ENCODE measurements at regions of chr7 and their contacts with region 1.

Region 1: DNA sequence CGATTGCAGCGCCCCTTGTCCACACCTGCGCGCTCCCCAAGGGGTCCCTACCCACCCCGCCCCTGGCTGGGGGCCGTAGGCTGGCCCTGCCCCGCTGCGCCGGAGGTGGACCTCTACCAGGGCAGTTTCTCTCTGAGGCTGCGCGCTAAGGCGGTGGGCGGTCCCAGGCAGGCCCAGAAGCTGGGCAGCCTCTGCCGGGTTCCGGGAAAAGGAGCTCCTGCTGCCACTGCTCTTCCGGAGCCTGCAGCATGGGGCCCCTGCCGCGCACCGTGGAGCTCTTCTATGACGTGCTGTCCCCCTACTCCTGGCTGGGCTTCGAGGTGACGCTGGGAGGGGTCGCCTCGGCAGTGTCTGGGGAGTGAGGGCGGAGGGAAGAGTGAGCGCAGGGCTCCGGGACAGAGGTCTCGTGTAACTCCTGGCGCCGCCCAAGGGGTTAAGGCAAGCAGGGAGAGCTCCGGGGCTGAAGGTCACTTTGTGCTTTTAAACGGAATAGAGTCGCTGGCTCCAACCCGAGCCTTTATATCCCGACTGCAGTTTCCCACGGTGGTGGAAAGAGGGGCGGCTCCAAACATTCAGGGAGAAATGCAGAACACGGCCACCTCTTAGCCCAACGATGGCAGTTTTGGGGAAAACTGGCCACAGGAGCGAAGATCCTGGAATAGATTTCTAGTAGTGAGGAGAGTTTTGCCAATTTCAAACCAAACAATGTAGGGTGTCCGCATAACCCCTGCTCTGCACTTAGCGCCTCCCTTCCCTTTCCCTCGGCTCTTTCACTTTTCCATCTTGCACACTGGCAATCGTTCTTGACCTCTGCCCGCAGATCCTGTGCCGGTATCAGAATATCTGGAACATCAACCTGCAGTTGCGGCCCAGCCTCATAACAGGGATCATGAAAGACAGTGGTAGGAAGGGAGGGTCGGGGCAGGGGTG is at the start of gene GSTK1:
- DNase-seq: peak; percentile 96
- H3K4me3 Mint-ChIP-seq: peak within 1 kb of the TSS; percentile 97
- H3K27ac Mint-ChIP-seq: peak within 1 kb of the TSS; percentile 92
- H3K4me1 Mint-ChIP-seq: peaks cover 46% of the 10 kb centered on the region
- H3K27me3 Mint-ChIP-seq: no peaks in the 10 kb centered on the region
- total RNA-seq, gene GSTK1: 138 and 142 TPM in 2 replicates

Region 2: DNA sequence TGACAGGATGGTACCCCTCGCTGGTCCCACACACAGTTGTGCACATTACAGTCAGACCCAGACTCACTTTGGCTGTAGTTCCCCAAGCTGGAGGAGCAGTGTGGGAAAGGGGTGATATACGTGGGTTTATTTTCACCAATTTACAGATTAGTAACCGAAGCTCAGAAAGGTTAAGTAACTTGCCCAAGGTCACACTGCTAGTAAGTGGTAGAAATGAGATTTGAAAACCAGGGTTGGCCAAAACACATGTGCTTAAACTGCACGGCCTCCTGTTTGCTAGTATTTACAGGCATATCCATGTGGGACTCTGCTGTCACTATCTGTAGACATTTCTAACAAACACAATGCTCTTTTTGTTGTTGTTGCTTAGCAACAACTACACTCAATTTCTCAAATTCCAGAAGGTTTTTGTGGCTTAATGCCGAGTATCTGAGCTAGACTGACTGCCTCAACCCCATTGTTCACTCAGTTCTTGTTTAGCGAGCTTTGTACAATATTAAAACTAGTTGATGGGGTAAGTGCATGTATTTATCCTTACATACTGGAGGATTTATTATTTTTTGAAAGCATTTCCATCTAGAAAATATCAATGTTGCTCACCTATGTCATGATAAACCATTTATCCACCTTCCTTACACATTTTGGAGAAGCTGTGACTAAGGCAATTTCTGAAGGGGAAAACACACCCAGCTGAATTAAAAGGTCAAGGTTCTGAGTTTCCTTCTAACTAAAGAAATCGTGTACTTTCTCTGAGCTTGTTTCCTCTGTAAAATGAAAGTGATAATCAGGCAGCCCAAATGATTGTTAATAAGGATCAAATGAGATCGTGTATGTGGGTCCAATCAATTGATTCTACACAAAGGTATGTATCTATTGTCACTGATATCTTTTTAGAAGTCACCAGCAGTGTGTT is 15.9 kb after region 1 on chr7:
- intact Hi-C with region 1: loop called (anchors 2 kb)
- DNase-seq: peak; percentile 69
- H3K4me3 Mint-ChIP-seq: peak overlapping the region; percentile 85
- H3K27ac Mint-ChIP-seq: peak overlapping the region; percentile 96
- H3K4me1 Mint-ChIP-seq: peaks cover 40% of the 10 kb centered on the region
- H3K27me3 Mint-ChIP-seq: no peaks in the 10 kb centered on the region

Region 3: DNA sequence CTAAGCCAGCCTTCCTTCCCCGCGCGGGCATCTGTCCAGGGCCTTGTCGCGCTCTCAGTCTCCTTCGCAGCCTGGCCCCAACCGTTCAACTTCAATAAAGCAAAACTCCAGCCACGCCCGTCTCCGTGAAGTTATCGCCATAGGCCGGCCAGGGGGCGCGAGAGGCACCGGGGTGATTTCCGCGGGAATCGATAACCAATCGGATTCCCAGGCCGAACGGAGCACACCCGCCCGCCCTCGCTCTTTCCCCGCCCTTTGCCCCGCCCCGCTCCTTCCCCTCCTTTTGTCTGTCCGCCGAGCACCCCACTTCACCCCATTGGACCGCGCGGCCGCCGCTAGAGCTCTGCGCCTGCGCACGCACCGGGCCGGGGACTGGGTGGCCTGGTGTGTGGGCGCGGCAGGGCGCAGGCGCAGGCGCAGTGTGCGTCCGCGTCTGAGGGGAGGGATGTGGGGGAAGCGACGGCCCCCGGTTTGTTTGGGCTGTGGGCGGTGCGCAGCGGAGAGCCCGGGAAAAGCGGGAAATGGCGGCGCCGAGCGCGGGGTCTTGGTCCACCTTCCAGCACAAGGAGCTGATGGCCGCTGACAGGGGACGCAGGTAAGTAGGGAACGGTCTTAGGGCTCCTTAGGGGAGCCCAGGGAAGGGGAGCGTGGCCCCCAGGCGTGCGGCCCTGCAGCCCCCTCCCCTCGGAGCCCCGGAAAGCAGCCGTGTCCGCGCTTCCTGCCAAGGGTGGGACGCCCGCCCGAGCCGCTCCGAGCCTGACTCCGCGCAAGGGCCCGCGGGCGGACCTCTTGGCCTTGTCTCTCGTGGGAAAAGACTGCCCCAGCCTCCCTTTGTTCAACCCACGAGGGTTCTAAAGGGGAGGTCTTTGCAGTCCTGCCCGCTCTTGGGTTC is 24.6 kb after region 1 on chr7 and contains the start of gene CASP2:
- intact Hi-C with region 1: loop called (anchors 1 kb)
- DNase-seq: peak; percentile 100
- H3K4me3 Mint-ChIP-seq: peak within 1 kb of the TSS; percentile 97
- H3K27ac Mint-ChIP-seq: peak within 1 kb of the TSS; percentile 95
- H3K4me1 Mint-ChIP-seq: peaks cover 54% of the 10 kb centered on the region
- H3K27me3 Mint-ChIP-seq: no peaks in the 10 kb centered on the region
- total RNA-seq, gene CASP2: 99.1 and 110 TPM in 2 replicates

Region 4: GRCh38 chr7:143299840-143300239 is 36.3 kb after region 1 on chr7:
- intact Hi-C with region 1: loop called (anchors 2 kb)
- DNase-seq: peak; percentile 90
- H3K4me3 Mint-ChIP-seq: no peak overlapping the region
- H3K27ac Mint-ChIP-seq: no peak overlapping the region
- H3K4me1 Mint-ChIP-seq: peaks cover 65% of the 10 kb centered on the region
- H3K27me3 Mint-ChIP-seq: no peaks in the 10 kb centered on the region

Region 5: GRCh38 chr7:143345428-143345900 is 81.9 kb after region 1 on chr7:
- intact Hi-C with region 1: no loop called
- DNase-seq: peak; percentile 90
- H3K4me3 Mint-ChIP-seq: peak overlapping the region; percentile 77
- H3K27ac Mint-ChIP-seq: peak overlapping the region; percentile 52
- H3K4me1 Mint-ChIP-seq: peaks cover 18% of the 10 kb centered on the region
- H3K27me3 Mint-ChIP-seq: peaks cover 50% of the 10 kb centered on the region

Measured in activated CD4-positive, alpha-beta T cell treated with anti-CD3 and anti-CD28 coated beads, Interleukin-2, amount 10 ng/mL, durations not matched to agents 24 days and 14 days (primary cell).